ENCODE measurements at regions of chr4 and their contacts with region 1.

Region 1: DNA sequence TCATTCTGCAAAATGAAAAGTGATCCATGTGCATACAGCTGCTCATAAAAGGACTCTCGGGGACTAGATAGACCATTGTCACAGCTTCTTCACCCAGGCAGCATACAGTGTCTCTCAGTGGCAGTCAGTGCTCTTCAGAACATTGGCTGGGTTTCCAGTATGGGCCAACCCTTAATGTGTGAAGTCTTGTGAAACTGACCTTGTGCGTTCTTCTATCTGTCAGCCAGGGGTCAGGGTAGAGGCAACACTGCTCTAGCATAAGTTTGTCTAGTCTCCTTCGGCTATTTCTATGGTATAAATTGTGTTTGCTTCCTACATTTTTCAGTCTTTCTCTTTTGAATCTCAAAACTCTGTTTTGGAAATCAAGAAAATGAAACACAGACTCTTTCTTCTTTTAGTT is 37.0 kb upstream of the SMIM31 start:
- DNase-seq: no peak
- H3K4me3 Mint-ChIP-seq: no peak overlapping the region
- H3K27ac Mint-ChIP-seq: no peak overlapping the region
- H3K4me1 Mint-ChIP-seq: no peaks in the 10 kb centered on the region
- H3K27me3 Mint-ChIP-seq: peaks cover 6% of the 10 kb centered on the region

Region 2: GRCh38 chr4:164748375-164748774 is 31.5 kb after region 1 on chr4:
- CTCF ChIA-PET with region 1: no interaction called
- intact Hi-C with region 1: loop called (anchors 1 kb)
- DNase-seq: no peak
- H3K4me3 Mint-ChIP-seq: no peak overlapping the region
- H3K27ac Mint-ChIP-seq: no peak overlapping the region
- H3K4me1 Mint-ChIP-seq: no peaks in the 10 kb centered on the region
- H3K27me3 Mint-ChIP-seq: peaks cover 9% of the 10 kb centered on the region